GM12878 (cell line): ENCODE measurements at regions of chr7 and their contacts with region 1.

Region 1: GRCh38 chr7:56033671-56034432 is 17.4 kb downstream of the PSPH start:
- DNase-seq: peak; percentile 43
- ATAC-seq: peak; percentile 97
- H3K4me3 ChIP-seq: peak overlapping the region; percentile 68
- H3K27ac ChIP-seq: peak overlapping the region; percentile 53
- H3K4me1 ChIP-seq: no peaks in the 10 kb centered on the region
- H3K27me3 ChIP-seq: no peaks in the 10 kb centered on the region
- CTCF ChIP-seq: peak in 2 of 3 experiments; percentile 19 to 48; a peak in 2 of 6 replicates
- EP300 ChIP-seq: no peak
- POLR2A ChIP-seq: peak; percentile 69
- RAD21 ChIP-seq: no peak

Region 2: DNA sequence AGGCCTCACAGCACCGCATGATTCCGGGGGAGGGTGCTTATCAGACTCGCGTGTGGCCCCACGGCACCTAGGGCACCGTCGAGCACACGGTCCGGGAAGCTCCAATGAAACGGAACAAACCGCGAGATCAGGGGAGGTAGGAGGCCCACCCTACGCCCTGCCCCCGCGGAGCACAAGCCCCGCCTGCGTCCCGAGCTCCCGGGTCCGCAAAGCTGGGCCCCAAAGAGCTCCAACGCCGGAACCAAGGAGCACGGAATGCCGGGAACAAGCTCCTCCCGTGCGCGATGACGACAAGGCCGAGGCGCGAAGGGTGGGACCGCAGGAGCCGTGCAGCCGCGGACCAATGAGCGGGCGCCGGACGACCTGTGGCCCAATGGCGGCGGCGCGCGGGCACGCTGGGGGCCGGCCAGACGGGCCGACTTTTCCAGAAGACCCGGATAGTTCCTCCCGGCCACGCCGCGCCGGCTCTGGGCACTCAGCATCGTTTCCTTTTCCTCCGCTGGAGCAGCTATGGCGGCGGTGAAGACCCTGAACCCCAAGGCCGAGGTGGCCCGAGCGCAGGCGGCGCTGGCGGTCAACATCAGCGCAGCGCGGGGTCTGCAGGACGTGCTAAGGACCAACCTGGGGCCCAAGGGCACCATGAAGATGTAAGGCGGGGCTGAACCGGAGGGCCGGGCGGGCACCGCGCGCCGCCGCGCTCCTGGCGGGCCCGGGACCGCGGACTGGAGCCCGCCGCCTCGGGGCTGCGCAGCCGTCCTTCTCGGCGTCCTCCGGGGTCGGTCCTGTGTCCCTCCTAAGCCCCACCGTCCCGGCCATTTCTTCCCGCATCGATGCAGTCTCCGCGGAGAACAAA is 17.7 kb after region 1 on chr7 and contains the starts of genes CCT6A and PSPH:
- CTCF ChIA-PET with region 1: interaction called, 5 read pairs
- POLR2A ChIA-PET with region 1: interaction called, 6 read pairs
- RAD21 ChIA-PET with region 1: interaction called, 4 read pairs
- SMC1A ChIA-PET with region 1: interaction called, 3 read pairs
- in situ Hi-C with region 1: no loop called
- intact Hi-C with region 1: loop called (anchors 2 kb)
- DNase-seq: peak; percentile 87
- ATAC-seq: peak; percentile 94
- H3K4me3 ChIP-seq: peak within 1 kb of the TSS; percentile 86
- H3K27ac ChIP-seq: peak within 1 kb of the TSS; percentile 83
- H3K4me1 ChIP-seq: peaks cover 14% of the 10 kb centered on the region
- H3K27me3 ChIP-seq: no peaks in the 10 kb centered on the region
- CTCF ChIP-seq: no peak
- EP300 ChIP-seq: no peak
- POLR2A ChIP-seq: peak; percentile 91
- RAD21 ChIP-seq: no peak
- polyA plus RNA-seq, gene CCT6A: 191 to 319 TPM
- polyA plus RNA-seq, gene PSPH: 5.2 to 10.5 TPM

Region 3: DNA sequence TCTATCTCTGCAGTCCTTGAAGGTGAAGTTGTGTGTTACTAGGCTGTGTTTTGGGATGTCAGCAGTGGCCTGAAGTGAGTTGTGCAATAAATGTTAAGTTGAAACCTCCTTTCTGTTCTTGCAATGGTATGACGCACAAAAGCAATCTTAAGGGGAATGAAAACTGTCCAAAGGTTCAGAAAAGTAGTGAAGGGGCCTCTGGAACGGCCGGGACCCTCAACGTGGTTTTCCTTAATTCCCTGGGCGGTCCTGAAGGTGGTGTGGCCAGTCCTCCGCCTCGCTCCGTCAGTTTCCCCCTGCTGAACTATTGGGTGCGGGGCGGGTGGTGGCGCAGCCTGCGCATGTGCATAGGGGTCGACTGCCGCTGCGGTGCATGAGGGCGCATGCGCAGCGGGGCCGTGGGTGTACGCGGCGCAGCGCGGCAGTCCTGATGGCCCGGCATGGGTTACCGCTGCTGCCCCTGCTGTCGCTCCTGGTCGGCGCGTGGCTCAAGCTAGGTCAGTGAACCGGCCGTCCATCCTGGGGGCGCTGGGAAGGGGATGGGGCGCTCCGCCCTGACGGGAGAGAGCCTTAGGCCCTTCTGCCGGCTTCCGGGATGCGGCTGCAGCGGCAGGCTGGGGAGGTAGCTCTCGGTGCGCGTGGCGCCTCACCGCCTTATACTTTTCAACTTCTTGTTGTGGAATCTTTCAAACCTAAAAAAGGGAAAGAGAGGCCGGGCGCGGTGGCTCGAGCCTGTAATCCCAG is 30.2 kb after region 1 on chr7 and contains the start of gene SUMF2:
- CTCF ChIA-PET with region 1: no interaction called
- POLR2A ChIA-PET with region 1: interaction called, 3 read pairs
- RAD21 ChIA-PET with region 1: no interaction called
- SMC1A ChIA-PET with region 1: interaction called, 4 read pairs
- in situ Hi-C with region 1: no loop called
- intact Hi-C with region 1: loop called (anchors 2 kb)
- DNase-seq: peak; percentile 78
- ATAC-seq: peak; percentile 95
- H3K4me3 ChIP-seq: peak within 1 kb of the TSS; percentile 72
- H3K27ac ChIP-seq: peak within 1 kb of the TSS; percentile 71
- H3K4me1 ChIP-seq: peaks cover 6% of the 10 kb centered on the region; the same call in 1 of the 2 replicates
- H3K27me3 ChIP-seq: no peaks in the 10 kb centered on the region
- CTCF ChIP-seq: peak in 2 of 3 experiments; percentile 12 to 32; a peak in 2 of 6 replicates
- EP300 ChIP-seq: no peak
- POLR2A ChIP-seq: peak; percentile 99
- RAD21 ChIP-seq: no peak
- polyA plus RNA-seq, gene SUMF2: 39.9 to 62.4 TPM

Region 4: DNA sequence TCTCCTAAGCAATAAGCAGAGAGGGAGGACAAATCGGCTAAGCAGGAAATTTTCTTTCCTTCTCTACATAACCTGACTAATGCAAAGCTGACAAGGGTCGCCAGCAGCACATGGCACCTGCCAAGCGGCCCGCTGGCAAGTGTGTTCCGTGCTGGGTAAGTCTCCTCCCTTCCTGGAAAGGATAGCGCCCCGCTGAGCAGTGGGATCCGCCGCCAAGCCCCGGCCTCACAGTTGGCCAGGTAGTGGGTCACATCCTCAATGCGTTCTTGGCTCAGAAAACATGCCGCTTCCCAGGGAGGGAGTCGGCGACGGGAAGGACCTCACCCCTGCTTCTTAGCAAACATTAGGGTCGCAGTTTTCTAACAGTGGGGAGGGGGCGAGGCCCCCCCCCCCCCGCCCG is 571.3 kb after region 1 on chr7:
- CTCF ChIA-PET with region 1: no interaction called
- POLR2A ChIA-PET with region 1: no interaction called
- RAD21 ChIA-PET with region 1: no interaction called
- SMC1A ChIA-PET with region 1: no interaction called
- in situ Hi-C with region 1: no loop called
- intact Hi-C with region 1: no loop called
- DNase-seq: no peak
- ATAC-seq: no peak
- H3K4me3 ChIP-seq: no peak overlapping the region
- H3K27ac ChIP-seq: no peak overlapping the region
- H3K4me1 ChIP-seq: no peaks in the 10 kb centered on the region
- H3K27me3 ChIP-seq: no peaks in the 10 kb centered on the region
- CTCF ChIP-seq: no peak
- EP300 ChIP-seq: no peak
- POLR2A ChIP-seq: no peak
- RAD21 ChIP-seq: no peak